Sciatic nerve (tissue), 2 donors: ENCODE measurements at regions of chr5 and their contacts with region 1.

Region 1: DNA sequence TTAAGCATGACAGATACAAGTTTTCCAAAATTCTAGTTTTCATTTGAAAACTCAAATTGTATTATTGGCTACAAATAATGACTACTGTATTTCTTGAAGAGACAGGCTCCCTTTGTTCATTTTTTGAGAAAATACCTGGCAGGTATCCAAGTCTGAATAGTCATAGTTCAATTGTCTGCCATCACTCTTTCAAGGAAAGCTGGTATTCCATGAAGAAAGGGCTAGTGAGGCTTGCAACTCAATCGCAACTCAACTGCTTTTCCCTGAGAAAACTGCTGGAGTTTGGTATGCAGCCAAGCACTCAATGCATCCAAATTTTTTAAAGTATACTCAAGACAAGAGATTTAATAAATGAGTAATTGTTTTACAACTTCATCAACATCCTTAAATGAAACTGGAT is 61.4 kb upstream of the TRIO start:
- DNase-seq: no peak
- ATAC-seq: no peak

Region 2: DNA sequence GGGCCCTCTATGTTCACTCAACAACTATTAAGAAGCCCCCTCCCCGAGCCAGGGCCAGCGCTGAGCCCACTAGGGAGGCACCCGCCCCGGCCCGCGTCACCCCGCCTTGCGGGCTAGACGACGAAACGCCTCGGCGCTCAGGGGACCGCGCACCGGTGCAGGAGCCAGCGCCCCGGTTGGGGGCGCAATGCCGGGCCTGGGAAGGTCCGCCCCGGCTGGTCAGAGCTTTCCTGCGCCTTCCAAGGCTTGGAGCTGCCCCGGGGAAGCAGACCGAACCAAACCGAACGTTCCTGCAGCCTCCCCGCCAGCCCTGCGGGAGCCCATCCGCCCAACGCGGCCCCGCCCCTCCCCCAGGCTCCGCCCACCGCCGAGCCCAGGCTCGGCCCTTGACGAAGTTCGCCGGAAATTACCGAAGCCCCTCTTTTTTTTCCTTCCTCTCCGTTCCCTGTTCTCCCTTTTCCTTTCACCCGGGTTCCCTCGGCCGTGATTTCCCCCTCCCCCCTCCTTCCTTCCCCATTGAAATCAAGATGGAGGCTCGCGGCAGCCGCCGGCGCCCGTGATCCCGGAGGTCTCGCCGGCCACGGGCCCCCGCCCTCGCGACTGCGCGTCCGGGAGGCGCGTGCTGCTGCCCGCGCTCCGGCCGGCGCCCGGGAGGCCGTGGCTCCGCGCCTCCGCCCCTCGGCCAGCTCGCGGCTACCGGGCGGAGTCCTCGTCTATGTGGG is 61.2 kb after region 1 on chr5 and contains the start of gene TRIO:
- intact Hi-C with region 1: no loop called
- DNase-seq: peak; percentile 97
- ATAC-seq: peak; percentile 96
- total RNA-seq, gene TRIO: 192 TPM

Region 3: GRCh38 chr5:14560091-14560595 is 478.4 kb after region 1 on chr5:
- intact Hi-C with region 1: loop called (anchors 10 kb)
- DNase-seq: no peak
- ATAC-seq: peak; percentile 63